HCT116 (cell line): ENCODE measurements at regions of chr10 and their contacts with region 1.

Region 1: GRCh38 chr10:51063659-51064535 is 10.4 kb upstream of the PRKG1 start:
- DNase-seq: peak; percentile 15
- ATAC-seq: peak; percentile 72
- H3K4me3 ChIP-seq: no peak overlapping the region
- H3K27ac ChIP-seq: no peak overlapping the region
- H3K4me1 ChIP-seq: no peaks in the 10 kb centered on the region
- H3K27me3 ChIP-seq: peaks cover 15% of the 10 kb centered on the region; the same call in 1 of the 2 replicates
- CTCF ChIP-seq: peak; percentile 37 to 69 (median 38); a peak in 5 of 6 replicates
- POLR2A ChIP-seq: no peak
- RAD21 ChIP-seq: peak; percentile 61

Region 2: GRCh38 chr10:51422311-51423120 is 358.6 kb after region 1 on chr10:
- CTCF ChIA-PET with region 1: interaction called, 6 read pairs
- POLR2A ChIA-PET with region 1: no interaction called
- RAD21 ChIA-PET with region 1: no interaction called
- intact Hi-C with region 1: loop called (anchors 2 kb)
- DNase-seq: peak; percentile 16
- ATAC-seq: peak; percentile 81
- H3K4me3 ChIP-seq: no peak overlapping the region
- H3K27ac ChIP-seq: no peak overlapping the region
- H3K4me1 ChIP-seq: no peaks in the 10 kb centered on the region
- H3K27me3 ChIP-seq: 0 out of 2 replicates have a peak, but pooled peaks cover 8% of the 10 kb centered on the region
- CTCF ChIP-seq: peak; percentile 44 to 83 (median 66); a peak in 5 of 6 replicates
- POLR2A ChIP-seq: no peak
- RAD21 ChIP-seq: peak; percentile 60

Region 3: DNA sequence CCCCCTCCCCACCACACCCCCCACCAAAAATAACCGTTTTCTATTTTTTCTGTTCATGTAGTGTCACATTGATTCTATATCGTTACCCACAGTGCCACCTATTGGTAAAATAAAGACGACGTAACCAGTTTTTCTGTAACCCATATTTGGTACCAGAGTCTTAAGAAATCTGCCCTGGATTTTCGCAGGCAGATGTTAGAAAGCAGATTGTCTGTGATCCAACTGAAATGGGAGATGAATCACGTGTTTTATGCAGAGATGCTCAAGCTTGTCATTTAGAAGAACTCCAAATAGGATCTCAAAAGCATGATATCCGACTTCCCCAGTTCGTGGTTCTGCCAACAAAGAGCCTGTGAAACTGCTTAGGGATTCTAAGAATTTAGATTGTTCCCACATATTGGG is 896.6 kb after region 1 on chr10:
- CTCF ChIA-PET with region 1: no interaction called
- POLR2A ChIA-PET with region 1: no interaction called
- RAD21 ChIA-PET with region 1: no interaction called
- intact Hi-C with region 1: loop called (anchors 5 kb)
- DNase-seq: peak; percentile 10
- ATAC-seq: peak; percentile 67
- H3K4me3 ChIP-seq: no peak overlapping the region
- H3K27ac ChIP-seq: no peak overlapping the region
- H3K4me1 ChIP-seq: no peaks in the 10 kb centered on the region
- H3K27me3 ChIP-seq: peaks cover 19% of the 10 kb centered on the region; the same call in 1 of the 2 replicates
- CTCF ChIP-seq: peak; percentile 36 to 64 (median 38); a peak in 4 of 6 replicates
- POLR2A ChIP-seq: no peak
- RAD21 ChIP-seq: peak; percentile 52

Region 4: DNA sequence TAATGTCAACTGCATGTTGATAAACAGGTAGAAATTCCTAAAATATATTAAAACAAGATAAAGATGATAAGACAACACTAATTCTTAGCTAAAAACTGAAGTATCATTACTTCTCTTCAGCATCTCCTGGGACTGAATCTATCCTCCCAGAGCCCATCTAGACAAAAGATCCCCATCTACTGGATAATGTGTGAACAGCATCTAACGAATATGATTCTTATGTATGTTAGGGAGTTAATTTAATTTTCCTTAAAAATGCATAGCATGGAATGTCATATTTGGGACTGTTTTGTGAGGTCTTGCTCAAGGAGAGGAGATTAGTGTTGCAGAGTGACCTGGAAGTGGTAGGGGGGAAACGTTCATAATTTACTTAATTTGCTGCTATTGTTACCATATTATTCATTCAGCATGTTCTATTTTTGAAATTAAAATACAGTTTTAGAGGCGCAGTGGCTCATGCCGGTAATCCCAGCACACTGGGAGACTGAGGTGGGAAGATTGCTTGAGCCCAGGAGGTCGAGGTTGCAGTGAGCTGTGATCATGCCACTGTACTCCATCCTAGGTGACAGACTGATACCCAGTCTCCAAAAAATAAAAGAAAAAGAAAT is 940.5 kb after region 1 on chr10:
- CTCF ChIA-PET with region 1: no interaction called
- POLR2A ChIA-PET with region 1: no interaction called
- RAD21 ChIA-PET with region 1: no interaction called
- intact Hi-C with region 1: loop called (anchors 10 kb)
- DNase-seq: peak; percentile 22
- ATAC-seq: peak; percentile 73
- H3K4me3 ChIP-seq: no peak overlapping the region
- H3K27ac ChIP-seq: no peak overlapping the region
- H3K4me1 ChIP-seq: no peaks in the 10 kb centered on the region
- H3K27me3 ChIP-seq: peaks cover 31% of the 10 kb centered on the region
- CTCF ChIP-seq: peak; percentile 26 to 62 (median 58); a peak in 5 of 6 replicates
- POLR2A ChIP-seq: no peak
- RAD21 ChIP-seq: peak; percentile 46